Activated CD8-positive, alpha-beta T cell treated with anti-CD3 and anti-CD28 coated beads for 36 hours (primary cell): ENCODE measurements at regions of chr20 and their contacts with region 1.

Region 1: DNA sequence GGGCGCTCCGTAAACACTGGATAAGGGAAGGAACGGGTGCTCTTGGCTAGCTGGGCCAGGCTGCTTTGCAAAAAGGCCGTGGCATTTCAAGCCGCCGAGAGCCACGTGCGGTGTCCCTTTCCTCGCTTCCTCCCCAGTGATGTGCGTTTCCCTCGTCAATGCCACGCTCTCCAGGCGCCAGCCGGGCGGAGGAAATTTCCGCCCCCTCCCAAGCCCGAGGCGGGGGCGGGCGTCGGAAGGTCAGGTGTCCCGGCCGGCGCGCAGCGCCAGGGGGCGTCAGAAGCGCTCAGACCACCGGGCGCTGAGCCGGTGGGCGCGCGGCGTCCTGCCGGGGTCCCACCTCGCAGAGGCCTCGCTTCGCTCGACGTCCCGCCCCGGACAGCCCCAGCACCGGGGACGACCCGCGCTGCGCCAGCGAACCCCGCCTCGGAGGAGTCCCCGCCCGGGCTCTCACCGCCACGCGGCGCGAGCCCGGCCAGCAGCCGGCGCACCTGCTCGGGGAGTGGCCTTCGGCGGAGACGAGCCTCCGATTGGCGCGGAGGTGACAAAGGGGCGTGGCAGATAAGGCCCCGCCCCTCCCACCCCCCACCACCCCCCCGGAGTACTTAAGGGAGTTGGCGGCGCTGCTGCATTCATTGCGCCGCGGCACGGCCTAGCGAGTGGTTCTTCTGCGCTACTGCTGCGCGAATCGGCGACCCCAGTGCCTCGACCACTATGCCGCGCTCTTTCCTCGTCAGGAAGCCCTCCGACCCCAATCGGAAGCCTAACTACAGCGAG is at the start of gene SNAI1:
- DNase-seq: peak; percentile 81
- ATAC-seq: peak; percentile 89
- H3K4me3 Mint-ChIP-seq: peak within 1 kb of the TSS; percentile 65
- H3K27ac Mint-ChIP-seq: peak within 1 kb of the TSS; percentile 66
- H3K4me1 Mint-ChIP-seq: peaks cover 30% of the 10 kb centered on the region
- H3K27me3 Mint-ChIP-seq: peaks cover 3% of the 10 kb centered on the region
- CTCF ChIP-seq: peak; percentile 74
- total RNA-seq, gene SNAI1: 0.90 to 1.4 TPM

Region 2: GRCh38 chr20:49964964-49965780 is 17.4 kb before region 1 on chr20:
- CTCF ChIA-PET with region 1: interaction called, 13 read pairs
- POLR2A ChIA-PET with region 1: no interaction called
- intact Hi-C with region 1: no loop called
- DNase-seq: peak; percentile 47
- ATAC-seq: peak; percentile 79
- H3K4me3 Mint-ChIP-seq: no peak overlapping the region
- H3K27ac Mint-ChIP-seq: no peak overlapping the region
- H3K4me1 Mint-ChIP-seq: no peaks in the 10 kb centered on the region
- H3K27me3 Mint-ChIP-seq: no peaks in the 10 kb centered on the region
- CTCF ChIP-seq: peak; percentile 68

Region 3: DNA sequence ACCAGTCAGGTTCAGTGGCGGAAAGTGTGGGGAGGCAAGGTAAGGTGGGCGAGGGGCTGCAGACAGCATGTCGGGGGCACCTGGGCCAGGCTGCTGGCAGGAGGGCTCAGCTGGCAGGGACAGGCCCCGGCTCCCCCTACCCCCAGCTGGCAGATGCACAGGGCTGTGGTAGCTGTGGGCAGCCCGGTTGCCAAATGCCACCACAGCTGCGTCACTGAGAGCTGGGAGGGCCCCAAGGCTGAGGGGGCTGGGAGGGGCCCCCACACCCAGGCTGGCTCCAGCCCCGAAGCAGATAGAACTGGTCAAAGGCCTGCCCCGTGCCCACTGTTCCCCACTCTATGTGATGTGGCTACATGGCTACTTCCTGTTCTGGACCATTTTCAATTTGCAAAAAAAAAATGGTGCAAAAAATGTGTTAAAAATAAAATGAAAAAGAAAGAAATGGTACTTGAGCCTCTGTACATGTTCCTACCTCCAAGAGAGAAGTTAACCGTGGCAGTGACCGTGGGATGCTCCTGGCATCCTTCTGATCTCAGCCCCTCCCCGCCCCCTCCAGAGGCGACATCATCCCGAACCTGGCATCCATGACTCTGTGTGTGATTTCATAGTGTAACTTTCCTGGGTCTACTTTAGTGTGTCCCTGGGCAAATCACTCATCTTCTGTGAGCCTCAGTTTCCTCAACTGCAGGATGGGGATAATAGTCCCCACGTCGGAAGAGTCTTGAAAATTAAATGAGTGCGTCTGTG is 66.1 kb after region 1 on chr20:
- CTCF ChIA-PET with region 1: interaction called, 12 read pairs
- POLR2A ChIA-PET with region 1: interaction called, 3 read pairs
- intact Hi-C with region 1: no loop called
- DNase-seq: peak; percentile 61
- ATAC-seq: peak; percentile 86
- H3K4me3 Mint-ChIP-seq: no peak overlapping the region
- H3K27ac Mint-ChIP-seq: peak overlapping the region; percentile 4
- H3K4me1 Mint-ChIP-seq: peaks cover 16% of the 10 kb centered on the region
- H3K27me3 Mint-ChIP-seq: peaks cover 9% of the 10 kb centered on the region
- CTCF ChIP-seq: no peak

Region 4: GRCh38 chr20:50085452-50086365 is 103.2 kb after region 1 on chr20:
- CTCF ChIA-PET with region 1: interaction called, 52 read pairs
- POLR2A ChIA-PET with region 1: no interaction called
- intact Hi-C with region 1: no loop called
- DNase-seq: peak; percentile 49
- ATAC-seq: peak; percentile 86
- H3K4me3 Mint-ChIP-seq: peak overlapping the region; percentile 9
- H3K27ac Mint-ChIP-seq: peak overlapping the region; percentile 52
- H3K4me1 Mint-ChIP-seq: peaks cover 29% of the 10 kb centered on the region
- H3K27me3 Mint-ChIP-seq: no peaks in the 10 kb centered on the region
- CTCF ChIP-seq: peak; percentile 77

Region 5: GRCh38 chr20:50115591-50116372 is 133.2 kb after region 1 on chr20:
- CTCF ChIA-PET with region 1: interaction called, 10 read pairs
- POLR2A ChIA-PET with region 1: interaction called, 3 read pairs
- intact Hi-C with region 1: no loop called
- DNase-seq: peak; percentile 96
- ATAC-seq: peak; percentile 79
- H3K4me3 Mint-ChIP-seq: peak overlapping the region; percentile 94
- H3K27ac Mint-ChIP-seq: peak overlapping the region; percentile 93
- H3K4me1 Mint-ChIP-seq: peaks cover 44% of the 10 kb centered on the region
- H3K27me3 Mint-ChIP-seq: no peaks in the 10 kb centered on the region
- CTCF ChIP-seq: no peak

Region 6: GRCh38 chr20:50165684-50166554 is 183.4 kb after region 1 on chr20:
- CTCF ChIA-PET with region 1: interaction called, 34 read pairs
- POLR2A ChIA-PET with region 1: interaction called, 3 read pairs
- intact Hi-C with region 1: loop called (anchors 5 kb)
- DNase-seq: peak; percentile 95
- ATAC-seq: peak; percentile 98
- H3K4me3 Mint-ChIP-seq: peak overlapping the region; percentile 55
- H3K27ac Mint-ChIP-seq: peak overlapping the region; percentile 56
- H3K4me1 Mint-ChIP-seq: peaks cover 12% of the 10 kb centered on the region
- H3K27me3 Mint-ChIP-seq: peaks cover 4% of the 10 kb centered on the region
- CTCF ChIP-seq: no peak

Region 7: DNA sequence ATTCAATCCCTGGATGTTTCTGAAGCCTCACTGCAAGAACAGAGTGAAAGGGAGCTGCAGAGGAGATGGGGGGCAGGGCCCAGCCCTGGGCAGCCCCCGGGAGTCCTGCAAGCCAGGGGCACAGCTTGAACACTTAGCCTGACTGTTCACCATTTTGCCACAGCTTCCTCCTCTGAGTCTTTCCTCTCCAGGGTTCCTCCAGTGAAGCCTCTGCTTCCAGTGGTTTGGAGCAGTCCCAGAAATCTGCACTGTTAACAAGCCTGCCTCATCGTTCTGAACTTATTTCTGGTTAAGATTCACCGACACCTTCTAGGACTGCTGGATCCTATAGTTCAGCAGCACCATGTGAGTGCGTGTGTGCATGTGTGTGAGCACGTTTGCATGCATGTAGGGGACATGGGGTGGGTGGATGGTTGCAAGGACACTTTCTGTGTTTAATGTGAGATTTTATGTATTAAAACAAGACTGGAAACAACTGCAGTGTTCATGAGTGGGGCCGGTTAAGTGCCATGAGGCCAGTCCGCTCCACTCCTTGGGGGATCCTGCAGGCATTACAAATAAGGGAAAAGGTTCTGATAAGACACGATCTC is 232.7 kb after region 1 on chr20:
- CTCF ChIA-PET with region 1: no interaction called
- POLR2A ChIA-PET with region 1: no interaction called
- intact Hi-C with region 1: no loop called
- DNase-seq: no peak
- ATAC-seq: no peak
- H3K4me3 Mint-ChIP-seq: no peak overlapping the region
- H3K27ac Mint-ChIP-seq: no peak overlapping the region
- H3K4me1 Mint-ChIP-seq: peaks cover 6% of the 10 kb centered on the region
- H3K27me3 Mint-ChIP-seq: peaks cover 10% of the 10 kb centered on the region
- CTCF ChIP-seq: no peak